ENCODE measurements at regions of chr1 and their contacts with region 1.

Region 1: DNA sequence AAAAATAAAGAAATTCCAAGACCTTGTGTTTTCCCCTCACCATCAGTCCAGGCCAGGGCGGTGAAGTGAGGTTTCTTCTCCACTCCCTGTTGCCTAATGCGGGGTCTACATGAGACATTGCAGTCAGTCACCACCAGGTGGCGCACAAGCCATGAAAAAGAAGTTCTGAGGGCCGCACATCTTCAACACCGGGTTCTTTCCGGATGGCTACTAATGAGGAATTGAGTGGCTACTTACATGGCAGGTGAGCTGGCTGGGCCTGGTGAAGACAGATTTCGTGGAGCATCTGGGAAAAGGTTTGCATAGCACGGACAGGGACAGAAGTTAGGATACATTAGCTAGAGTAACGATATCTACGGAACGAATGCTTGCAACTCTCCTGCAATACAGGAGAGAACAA is 15.8 kb upstream of the S100A11 start:
- DNase-seq: peak; percentile 91
- ATAC-seq: peak; percentile 66

Region 2: GRCh38 chr1:152440635-152441471 is 388.2 kb after region 1 on chr1:
- intact Hi-C with region 1: loop called (anchors 10 kb)
- DNase-seq: peak; percentile 75
- ATAC-seq: peak; percentile 90

Measured in Right ventricle myocardium superior (tissue), 1 donor.